Breast epithelium (tissue), 4 donors: ENCODE measurements at regions of chr12 and their contacts with region 1.

Region 1: DNA sequence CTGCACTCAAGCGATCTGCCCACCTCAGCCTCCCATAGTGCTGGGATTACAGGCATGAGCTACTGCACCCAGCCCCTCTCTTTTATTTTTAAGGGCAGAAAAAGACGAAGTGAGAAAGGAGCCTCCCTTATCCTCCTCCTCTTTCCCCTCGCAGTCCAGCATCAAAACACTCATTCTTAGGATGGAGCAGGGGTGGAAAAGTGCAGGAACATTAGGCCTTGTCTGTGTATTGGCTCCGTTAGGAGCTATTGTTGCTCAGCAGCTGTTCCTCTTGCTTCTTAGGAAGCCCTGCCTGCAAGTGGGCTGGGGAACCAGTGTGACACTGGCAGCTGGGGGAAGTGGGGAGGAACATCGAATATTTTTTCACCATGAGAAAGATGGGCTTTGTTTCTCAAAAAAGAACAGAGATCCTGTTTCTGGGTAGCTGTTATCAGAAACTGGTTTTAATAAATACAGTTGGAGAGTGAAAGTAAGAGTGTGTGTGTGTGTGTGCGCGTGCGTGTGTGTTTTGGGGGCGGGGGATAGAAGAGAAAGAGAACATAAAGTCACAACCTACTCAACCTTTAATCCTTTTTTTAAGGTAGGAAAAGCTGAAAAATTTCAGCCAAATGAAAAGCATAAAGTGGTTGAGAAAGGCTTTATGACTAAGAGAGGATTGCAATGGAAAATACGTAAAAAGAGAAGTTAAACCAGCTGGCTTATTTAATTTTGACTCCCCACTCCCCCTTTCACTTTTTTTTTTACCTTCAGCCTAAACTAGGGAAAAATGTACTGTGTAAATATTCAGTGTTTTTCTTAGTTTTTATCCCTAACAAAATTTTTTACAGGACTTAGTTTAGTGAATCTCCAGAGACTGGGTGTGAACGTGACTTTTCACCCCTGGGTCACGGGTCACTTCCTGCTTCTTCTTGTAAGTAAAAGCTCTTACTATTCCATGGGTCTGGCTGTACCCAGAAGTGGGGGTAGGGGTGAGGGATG is 197.2 kb upstream of the PLEKHG7 start:
- DNase-seq: no peak
- H3K4me3 ChIP-seq: peak overlapping the region in 1 of 3 donors; percentile 31
- H3K27ac ChIP-seq: peak overlapping the region; percentile 65 to 93
- H3K4me1 ChIP-seq: peaks cover 0 to 9% of the 10 kb centered on the region in 2 donors
- H3K27me3 ChIP-seq: no peaks in the 10 kb centered on the region
- CTCF ChIP-seq: no peak
- POLR2A ChIP-seq: no peak

Region 2: DNA sequence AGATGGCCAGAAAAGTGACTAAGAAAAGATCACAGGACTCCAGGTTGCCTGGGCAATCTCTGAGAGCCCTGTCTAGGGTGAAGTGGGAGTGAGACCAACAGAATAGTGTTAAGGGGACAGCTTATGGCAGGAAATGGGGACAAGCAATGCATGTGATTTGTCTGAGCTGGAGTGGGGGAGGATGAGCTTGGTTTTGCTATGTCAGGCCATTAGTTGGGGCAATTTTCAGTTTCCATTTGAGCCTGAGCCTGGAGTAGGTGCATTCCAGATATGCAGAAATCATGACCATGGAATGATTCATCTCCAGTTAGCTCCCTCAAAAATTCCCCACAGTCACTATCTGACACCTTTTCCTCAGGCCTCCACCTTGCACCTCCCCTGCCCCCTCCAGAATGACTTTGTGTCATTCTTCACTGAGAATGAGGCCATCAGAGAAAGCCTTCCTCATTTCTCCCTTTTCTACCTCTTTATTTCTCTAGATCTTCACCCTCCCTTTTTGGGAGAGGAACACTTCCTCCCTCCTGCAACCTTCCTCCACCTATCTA is 46.4 kb after region 1 on chr12:
- intact Hi-C with region 1: loop called (anchors 10 kb)
- DNase-seq: no peak
- H3K4me3 ChIP-seq: no peak overlapping the region
- H3K27ac ChIP-seq: peak overlapping the region in 1 of 2 donors; percentile 82
- H3K4me1 ChIP-seq: peaks cover 0 to 7% of the 10 kb centered on the region in 2 donors
- H3K27me3 ChIP-seq: no peaks in the 10 kb centered on the region
- CTCF ChIP-seq: no peak
- POLR2A ChIP-seq: no peak